Right cardiac atrium (tissue), 5 donors: ENCODE measurements at regions of chr2 and their contacts with region 1.

Region 1: DNA sequence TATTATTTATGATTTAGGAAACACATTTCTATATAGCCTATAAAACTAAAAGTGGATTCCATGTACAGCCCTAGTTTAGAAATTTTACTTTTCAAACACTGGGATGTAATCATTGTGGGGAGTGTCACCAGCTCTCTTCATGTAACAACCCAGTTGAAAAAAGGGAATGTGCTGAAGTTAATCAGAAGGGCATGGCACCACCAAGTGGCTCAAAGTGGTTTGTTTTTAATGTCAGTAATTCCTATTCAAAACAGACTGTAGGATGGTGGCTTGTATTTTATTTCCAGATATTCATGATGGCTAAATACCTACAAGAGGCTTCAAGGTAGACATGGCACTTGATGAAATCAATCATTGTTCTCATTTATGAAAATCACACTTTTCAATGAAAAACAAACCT is 58.1 kb upstream of the TMEM182 start:
- DNase-seq: no peak
- ATAC-seq: peak; percentile 51 to 64
- H3K4me3 ChIP-seq: no peak overlapping the region
- H3K27ac ChIP-seq: no peak overlapping the region
- H3K4me1 ChIP-seq: no peaks in the 10 kb centered on the region
- H3K27me3 ChIP-seq: no peaks in the 10 kb centered on the region

Region 2: DNA sequence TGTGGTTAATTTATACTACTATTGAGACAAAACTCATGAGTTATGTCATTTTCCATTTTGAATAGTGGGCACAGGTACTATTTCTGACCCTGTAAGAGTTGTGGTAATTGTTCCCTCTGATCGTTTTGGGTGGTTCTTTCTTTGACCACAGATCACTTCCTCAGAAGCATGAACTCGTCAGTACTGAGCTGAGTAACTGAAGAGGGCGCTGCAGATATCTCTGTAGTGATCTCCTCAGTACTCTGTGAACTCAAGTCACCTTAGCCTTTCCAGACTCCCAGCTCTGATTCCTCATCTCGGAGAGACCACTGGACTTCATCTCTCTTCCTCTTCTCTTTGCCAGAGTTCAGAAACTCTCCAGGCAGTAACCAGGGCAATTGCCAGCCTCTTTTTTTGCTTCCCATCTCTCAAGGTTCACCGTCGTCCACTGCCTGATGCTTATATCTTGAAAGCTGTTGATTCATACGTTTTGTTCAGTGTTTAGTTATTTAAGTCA is 401.8 kb before region 1 on chr2:
- intact Hi-C with region 1: no loop called
- DNase-seq: no peak
- ATAC-seq: peak; percentile 66 to 83
- H3K4me3 ChIP-seq: no peak overlapping the region
- H3K27ac ChIP-seq: no peak overlapping the region
- H3K4me1 ChIP-seq: peaks cover 2% of the 10 kb centered on the region
- H3K27me3 ChIP-seq: no peaks in the 10 kb centered on the region

Region 3: GRCh38 chr2:102473020-102473419 is 230.7 kb before region 1 on chr2 and contains the start of gene SLC9A4:
- intact Hi-C with region 1: loop called in 3 of 4 experiments (anchors 5 kb)
- DNase-seq: peak in 1 of 3 donors; percentile 60
- ATAC-seq: peak in 1 of 2 donors; percentile 39
- H3K4me3 ChIP-seq: no peak within 1 kb of the TSS
- H3K27ac ChIP-seq: no peak within 1 kb of the TSS
- H3K4me1 ChIP-seq: no peaks in the 10 kb centered on the region
- H3K27me3 ChIP-seq: no peaks in the 10 kb centered on the region
- total RNA-seq, gene SLC9A4: not detected

Region 4: GRCh38 chr2:102478686-102479470 is 224.9 kb before region 1 on chr2:
- intact Hi-C with region 1: loop called in 3 of 4 experiments (anchors 5 kb)
- DNase-seq: peak in 1 of 3 donors; percentile 58
- ATAC-seq: no peak
- H3K4me3 ChIP-seq: no peak overlapping the region
- H3K27ac ChIP-seq: no peak overlapping the region
- H3K4me1 ChIP-seq: no peaks in the 10 kb centered on the region
- H3K27me3 ChIP-seq: no peaks in the 10 kb centered on the region

Region 5: DNA sequence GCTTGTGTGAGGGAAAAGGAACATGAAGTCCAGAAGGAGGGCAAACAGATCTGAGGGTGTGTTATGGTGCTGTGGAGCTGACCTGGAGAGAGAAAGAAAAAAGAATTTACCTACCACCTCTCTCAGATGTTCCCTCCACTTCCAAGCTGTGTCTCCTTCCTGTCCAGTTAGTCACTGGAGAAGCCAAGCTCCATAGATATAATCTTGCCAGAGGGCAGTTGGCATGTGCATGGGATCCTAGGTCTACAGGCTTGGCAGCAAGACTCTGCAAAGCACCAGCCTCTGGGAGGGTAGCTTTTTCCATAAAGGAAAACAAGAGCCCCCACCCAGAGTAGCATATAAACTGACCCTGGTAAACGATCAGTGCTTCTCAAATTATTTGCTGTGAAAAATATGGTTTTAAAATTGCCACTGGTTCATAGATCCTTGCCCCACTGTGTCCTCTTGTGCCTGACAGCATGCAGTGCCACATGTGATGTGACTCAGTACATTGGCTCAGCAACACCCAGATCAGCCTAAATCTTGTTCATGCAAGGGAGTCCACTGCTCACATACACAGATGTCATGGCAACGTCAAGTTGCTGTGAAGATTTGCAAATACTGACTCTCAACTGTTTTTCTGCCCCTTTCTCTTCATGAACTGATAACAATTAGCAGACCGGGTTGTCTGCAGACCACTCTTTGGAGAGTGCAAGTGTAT is 149.0 kb after region 1 on chr2:
- intact Hi-C with region 1: no loop called
- DNase-seq: no peak
- ATAC-seq: no peak
- H3K4me3 ChIP-seq: no peak overlapping the region
- H3K27ac ChIP-seq: no peak overlapping the region
- H3K4me1 ChIP-seq: no peaks in the 10 kb centered on the region
- H3K27me3 ChIP-seq: no peaks in the 10 kb centered on the region